GM10248 (cell line): ENCODE measurements at regions of chr2 and their contacts with region 1.

Region 1: DNA sequence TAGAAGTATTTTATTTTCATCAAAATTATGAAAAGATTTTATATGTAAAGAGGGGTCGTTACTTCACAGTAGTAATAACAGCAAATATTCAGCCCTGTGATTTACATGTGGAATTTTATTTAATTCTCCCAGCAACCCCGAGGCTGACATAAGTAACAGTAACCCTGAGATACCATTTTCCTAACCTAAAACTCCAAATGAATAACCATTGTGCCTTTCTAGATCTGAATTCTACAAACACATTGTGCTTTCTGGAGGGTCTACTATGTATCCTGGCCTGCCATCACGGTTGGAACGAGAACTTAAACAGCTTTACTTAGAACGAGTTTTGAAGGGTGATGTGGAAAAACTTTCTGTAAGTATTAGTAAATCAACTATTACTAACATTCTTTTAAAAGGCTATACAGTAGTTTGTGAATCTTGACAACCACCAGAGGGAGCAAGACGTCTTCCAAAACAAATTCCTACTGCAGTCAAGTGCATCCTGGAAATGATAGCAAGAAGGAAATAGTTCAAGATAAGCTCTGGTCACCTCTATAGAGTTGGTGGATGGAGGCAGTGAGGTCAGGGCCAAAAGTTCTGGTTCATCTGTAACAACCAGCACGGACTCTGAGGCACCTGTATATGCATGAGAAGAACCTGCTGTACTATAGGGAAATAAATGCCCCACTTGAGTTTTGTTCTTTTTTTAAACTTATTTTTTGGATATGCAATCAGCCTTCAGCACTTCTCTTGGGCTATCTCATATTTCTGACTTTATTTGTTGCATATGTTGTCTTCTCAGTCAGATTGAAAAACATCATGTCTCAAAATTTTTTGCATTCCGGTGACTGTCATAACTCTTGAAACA is 37.4 kb downstream of the ACTR2 start:
- DNase-seq: no peak
- CTCF ChIP-seq: peak; percentile 58

Region 2: GRCh38 chr2:65220432-65221131 is 44.5 kb before region 1 on chr2:
- CTCF ChIA-PET with region 1: no interaction called
- POLR2A ChIA-PET with region 1: no interaction called
- DNase-seq: no peak
- CTCF ChIP-seq: no peak

Region 3: DNA sequence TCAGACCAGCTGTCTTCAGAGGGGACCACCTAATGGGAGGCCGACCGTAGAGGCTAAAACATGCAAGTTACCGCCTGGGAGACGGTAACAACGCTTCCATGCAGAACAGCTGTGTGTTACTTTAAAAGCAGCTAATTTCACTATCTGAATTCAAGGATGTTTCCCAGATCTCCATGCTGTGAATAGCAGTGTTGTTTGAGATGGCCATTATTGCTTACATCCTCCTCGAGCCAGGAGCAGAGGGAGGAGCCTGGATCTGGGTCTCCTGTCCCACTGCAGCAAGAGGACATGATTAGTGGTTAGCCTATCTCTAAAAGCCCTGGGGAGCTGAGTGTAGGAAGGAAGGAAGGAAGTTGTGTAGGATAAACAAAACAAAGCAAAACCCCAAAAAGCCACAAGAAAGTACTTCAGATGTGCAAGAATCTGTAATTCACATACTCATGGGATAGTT is 13.5 kb after region 1 on chr2:
- CTCF ChIA-PET with region 1: interaction called, 16 read pairs
- POLR2A ChIA-PET with region 1: no interaction called
- DNase-seq: no peak
- CTCF ChIP-seq: no peak

Region 4: DNA sequence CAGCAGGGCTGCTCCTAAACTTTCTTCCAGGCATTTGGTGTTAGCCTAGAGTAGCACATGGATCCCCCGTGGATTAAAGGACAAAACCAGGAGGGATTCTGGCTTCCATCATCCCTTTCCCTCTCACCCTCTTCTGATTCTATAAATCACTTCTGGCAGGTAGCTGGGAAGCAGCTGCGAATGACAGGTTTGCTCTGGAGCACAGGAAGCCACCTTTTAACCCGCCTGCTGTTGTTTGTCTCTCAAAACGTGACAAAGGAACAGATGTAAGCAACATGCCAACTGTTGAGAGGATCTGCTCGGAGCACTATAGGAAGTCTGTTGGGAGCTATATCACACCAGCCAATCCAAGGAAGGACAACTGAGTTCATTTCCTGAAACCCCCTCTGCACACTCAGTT is 64.5 kb after region 1 on chr2:
- CTCF ChIA-PET with region 1: no interaction called
- POLR2A ChIA-PET with region 1: no interaction called
- DNase-seq: no peak
- CTCF ChIP-seq: no peak